ENCODE measurements at regions of chr11 and their contacts with region 1.

Region 1: DNA sequence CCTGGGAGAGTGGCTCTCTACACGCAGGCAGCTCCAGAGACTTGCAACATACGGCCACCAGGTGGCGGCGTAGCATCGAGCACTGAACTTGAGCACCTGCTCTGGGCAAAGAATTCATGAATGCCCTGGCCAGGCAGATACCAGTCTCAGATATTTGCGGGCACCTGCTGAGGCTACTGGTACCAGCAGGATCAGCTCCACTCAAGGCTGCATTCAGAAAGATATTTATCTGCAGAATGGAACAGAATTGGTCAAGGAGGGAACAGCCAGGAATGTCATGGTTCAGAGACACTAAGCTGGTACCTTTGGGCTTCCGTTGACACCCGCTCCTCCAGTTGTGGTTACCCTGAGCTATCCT is 10.8 kb upstream of the CCDC86 start:
- DNase-seq: no peak
- H3K4me3 ChIP-seq: no peak overlapping the region
- CTCF ChIP-seq: peak; percentile 89

Region 2: DNA sequence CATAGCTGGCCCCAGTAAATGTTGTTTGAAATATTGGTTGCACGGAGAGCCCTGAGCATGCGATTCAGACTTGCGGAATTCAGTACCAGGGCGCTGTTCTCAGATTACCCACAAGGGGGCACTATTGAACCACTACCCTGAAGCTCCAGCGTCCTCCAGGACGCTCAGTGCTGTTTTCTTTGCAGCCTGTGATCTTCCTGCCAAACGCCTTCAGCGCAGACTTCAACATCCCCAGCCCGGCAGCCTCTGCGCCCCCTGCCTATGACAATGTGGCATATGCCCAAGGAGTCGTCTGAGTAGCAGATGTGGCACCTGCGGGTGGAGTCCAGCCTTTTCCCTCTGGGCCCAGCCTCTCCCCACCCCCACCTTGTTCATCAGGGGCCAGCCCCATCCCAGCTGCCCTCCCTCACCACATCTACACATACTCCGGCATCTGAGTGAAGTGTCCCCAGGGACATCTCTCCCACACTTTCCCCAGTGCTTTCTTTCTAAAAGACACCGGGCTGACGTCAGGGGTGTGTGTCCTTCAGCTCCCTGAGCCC is 55.6 kb before region 1 on chr11:
- CTCF ChIA-PET with region 1: interaction called, 33 read pairs
- POLR2A ChIA-PET with region 1: no interaction called
- DNase-seq: peak; percentile 60
- H3K4me3 ChIP-seq: no peak overlapping the region
- CTCF ChIP-seq: peak; percentile 75

Region 3: DNA sequence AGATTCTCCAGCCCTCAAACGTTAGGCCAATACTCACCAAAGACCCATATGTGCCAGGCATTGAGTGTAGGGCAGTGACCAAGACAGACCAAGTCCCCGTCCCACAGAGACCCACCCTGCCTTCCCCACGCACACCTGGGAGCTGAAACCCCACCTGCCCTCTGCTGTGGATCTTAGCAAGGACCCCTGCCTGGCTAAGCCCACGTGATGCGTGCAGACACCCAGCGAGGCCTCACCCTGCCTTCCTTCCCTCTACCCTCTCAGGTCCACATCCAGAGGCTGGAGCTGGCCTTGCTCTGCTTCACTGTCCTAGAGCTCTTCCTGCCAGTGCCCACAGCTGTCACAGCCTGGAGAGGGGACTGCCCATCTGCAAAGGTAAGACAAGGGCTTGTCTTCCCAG is 35.8 kb before region 1 on chr11:
- CTCF ChIA-PET with region 1: interaction called, 11 read pairs
- POLR2A ChIA-PET with region 1: no interaction called
- DNase-seq: no peak
- H3K4me3 ChIP-seq: no peak overlapping the region
- CTCF ChIP-seq: no peak

Region 4: DNA sequence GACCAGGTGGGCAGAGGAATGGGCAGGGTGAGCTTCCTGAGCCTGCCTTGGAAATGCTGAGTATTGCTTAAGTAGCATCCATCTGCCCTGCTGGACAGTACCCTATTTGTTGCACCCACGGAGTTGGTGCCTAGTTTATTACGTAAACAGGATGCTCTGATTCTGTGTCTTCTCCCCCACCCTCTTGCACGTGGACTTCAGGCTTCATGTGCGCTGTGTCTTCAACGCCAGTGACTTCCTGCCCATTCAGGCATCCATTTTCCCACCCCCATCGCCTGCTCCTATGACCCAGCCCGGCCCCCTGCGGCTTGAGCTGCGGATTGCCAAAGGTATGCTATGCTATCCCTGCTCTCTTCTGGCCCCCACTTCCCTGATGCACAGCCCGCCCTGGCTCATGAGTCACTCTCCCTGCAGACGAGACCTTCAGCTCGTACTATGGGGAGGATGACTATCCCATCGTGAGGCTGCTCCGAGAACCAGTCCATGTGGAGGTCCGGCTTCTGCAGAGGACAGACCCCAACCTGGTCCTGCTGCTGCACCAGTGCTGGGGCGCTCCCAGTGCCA is 41.9 kb after region 1 on chr11:
- CTCF ChIA-PET with region 1: interaction called, 17 read pairs
- POLR2A ChIA-PET with region 1: no interaction called
- DNase-seq: peak; percentile 40
- H3K4me3 ChIP-seq: no peak overlapping the region
- CTCF ChIP-seq: no peak

Region 5: DNA sequence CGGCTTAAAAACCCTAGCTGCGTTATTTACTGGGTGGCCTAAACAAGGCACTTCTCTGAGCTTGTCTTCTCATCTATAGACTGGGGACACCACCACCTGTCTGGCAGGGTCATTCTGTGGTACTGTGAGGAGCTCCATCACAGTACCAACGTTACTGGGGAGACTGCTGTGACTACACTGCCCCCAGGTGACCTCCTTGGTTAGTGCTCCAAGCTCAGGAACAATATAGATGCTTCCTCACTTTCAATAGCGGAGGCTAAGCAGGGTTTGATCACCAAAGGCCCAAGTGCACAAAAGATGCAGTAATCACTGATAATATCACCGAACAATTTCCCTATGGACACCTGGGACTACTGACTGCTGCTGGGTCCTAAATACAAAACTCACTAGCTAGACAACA is 56.4 kb after region 1 on chr11:
- CTCF ChIA-PET with region 1: interaction called, 1,087 read pairs
- POLR2A ChIA-PET with region 1: interaction called, 12 read pairs
- DNase-seq: no peak
- H3K4me3 ChIP-seq: no peak overlapping the region
- CTCF ChIP-seq: peak; percentile 72

Region 6: DNA sequence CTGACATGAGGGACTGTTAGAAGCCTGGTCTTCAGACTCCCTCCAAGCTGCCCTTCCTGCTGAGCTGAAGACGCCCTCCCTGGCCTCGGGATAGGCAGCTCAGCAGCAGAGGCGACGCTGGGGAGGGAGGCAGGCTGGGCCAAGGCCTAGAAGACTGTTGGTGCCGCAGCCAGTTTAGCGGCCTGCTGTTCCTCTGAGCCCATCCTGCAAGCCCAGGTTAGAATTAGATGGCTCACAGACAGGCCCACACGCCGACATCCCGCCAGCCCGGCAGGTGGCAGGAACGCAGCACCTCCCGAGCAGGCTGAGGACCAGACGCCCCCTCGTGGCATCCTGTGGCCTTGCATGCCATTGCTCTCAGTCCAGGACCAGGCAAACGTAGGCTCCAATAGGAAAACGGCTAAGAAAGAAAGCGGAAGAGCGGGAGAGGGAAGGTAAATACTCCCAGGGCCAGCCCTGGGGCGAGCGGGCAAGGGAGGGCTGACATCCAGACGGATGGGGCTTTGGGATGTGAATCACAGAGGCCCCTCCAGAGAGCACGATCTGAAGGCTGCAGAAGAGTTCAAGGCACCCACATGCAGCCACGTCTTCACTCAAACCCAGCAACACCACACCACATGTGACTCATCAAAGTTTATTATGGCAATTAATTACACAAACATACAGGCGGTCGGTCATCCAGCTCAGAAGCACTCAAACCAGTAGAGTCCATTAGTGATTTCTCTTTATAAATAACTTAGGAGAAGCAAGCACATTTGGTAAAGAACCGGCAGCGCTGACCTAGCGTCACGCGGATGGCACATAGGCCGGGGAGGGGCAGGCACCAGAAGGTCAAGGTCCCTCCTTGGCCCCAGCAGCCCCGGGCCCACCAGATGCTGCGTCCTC is 298.8 kb after region 1 on chr11:
- CTCF ChIA-PET with region 1: interaction called, 24 read pairs
- POLR2A ChIA-PET with region 1: no interaction called
- DNase-seq: peak; percentile 65
- H3K4me3 ChIP-seq: peak overlapping the region; percentile 36
- CTCF ChIP-seq: peak; percentile 100

Region 7: DNA sequence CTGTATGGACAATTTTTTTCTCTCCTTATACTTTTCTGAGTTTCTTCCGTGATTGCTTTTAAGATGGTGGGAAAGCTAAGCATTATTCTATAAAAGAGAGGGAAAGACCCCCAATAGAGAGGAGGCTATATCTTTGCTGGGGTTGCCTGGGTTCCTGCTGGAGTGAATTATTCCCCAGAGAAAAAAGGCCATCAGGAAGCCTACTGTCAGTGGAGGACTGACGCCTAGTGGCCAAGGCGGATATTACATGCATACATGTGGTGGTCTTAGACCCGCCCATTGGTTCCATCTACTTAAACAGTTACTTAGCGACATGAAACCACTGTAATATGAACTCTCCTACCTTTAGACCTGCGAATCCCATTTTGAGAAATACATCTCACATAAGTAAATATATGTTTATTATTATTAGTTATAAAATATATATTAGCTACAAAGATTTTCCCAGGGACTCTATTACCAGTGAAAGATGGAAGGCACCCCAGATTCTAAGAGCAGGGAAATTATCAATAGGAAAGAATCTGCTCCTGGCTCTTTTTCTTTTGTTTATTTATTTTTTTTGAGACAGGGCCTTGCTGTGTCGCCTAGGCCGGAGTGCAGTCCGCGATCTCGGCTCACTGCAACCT is 356.5 kb after region 1 on chr11:
- CTCF ChIA-PET with region 1: interaction called, 33 read pairs
- POLR2A ChIA-PET with region 1: no interaction called
- DNase-seq: no peak
- H3K4me3 ChIP-seq: no peak overlapping the region
- CTCF ChIP-seq: peak; percentile 86

Region 8: GRCh38 chr11:61266602-61267001 is 435.5 kb after region 1 on chr11:
- CTCF ChIA-PET with region 1: no interaction called
- POLR2A ChIA-PET with region 1: no interaction called
- DNase-seq: no peak
- H3K4me3 ChIP-seq: no peak overlapping the region
- CTCF ChIP-seq: no peak

Measured in AG04449 (cell line).